ENCODE measurements at regions of chr14 and their contacts with region 1.

Region 1: DNA sequence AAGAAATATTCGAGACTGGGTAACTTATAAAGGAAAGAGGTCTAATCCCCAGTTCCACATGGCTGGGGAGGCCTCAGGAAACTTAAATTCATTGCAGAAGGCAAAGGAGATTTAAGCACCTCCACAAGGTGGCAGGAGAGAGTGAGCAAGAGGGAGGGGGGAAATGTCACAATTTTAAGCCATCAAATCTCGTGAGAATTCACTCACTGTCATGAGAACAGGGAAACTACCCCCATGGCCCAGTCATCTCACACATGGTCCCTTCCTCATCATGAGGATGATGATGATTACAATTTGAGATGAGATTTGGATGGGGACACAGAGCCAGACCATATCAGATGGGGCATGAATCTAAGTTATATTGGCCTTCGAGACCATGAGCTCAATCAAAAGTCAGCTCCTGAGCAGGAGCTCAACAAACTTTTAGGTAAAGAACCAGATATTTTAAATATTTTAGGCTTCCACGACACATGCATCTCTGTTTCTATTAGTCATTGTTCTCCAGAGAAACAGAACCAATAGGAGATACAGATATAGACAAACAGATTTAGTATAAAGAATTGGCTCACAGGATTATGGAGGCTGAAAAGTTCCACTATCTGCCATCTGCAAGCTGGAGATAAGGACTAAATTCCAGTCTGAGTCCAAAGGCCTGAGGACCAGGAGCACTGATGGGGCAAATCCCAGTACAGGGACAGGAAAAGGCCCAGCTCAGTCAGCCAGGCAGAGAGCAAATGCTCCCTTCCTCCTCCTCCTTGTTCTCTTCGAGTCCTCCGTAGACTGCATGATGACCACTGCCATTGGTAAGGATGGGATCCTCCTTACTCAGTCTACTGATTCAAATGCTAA is 24.9 kb downstream of the DGLUCY start:
- DNase-seq: no peak
- H3K4me3 ChIP-seq: no peak overlapping the region
- H3K27ac ChIP-seq: no peak overlapping the region
- H3K27me3 ChIP-seq: no peaks in the 10 kb centered on the region
- CTCF ChIP-seq: peak; percentile 54

Region 2: DNA sequence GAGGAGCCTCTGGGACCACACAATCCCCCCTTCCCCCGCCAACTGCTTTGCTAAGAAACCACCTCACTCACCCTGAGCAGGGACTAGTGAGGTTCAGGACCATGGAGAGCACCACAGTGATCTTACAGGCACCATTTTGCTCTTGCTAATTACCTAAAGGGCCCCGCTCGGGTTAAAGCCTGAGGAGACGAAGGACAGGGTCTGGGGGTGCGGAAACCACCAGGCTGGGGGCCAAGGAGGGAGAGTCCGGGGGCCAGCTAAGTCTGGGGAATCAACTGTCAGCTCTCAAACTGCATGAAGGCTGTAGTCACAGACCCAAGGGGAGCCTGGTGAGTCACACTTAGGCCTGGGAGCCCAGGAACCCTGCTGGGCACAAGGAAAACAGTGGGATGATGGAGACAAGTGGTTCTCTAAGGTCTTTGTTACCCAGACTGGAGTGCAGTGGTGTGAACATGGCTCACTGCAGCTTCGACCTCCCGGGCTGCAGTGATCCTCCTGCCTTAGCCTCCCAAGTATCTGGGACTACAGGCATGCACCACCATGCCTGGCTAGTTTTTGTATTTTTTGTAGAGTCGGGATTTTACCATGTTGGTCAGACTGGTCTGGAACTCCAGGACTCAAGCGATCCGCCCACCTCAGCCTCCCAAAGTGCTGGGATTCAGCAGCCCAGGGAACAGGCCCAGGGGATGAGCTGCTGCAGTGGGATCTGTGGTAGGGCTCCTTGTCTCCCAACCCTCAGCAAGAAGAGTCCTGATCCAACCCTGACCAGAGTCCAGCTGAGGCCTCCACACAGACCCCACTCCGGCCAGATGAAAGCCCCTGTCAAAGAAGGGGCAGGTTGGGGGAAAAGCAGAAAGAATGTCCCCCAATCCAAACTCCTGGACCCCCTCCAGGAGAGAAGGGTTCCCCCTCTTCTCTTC is 643.1 kb before region 1 on chr14:
- CTCF ChIA-PET with region 1: no interaction called
- POLR2A ChIA-PET with region 1: no interaction called
- DNase-seq: peak; percentile 44
- H3K4me3 ChIP-seq: no peak overlapping the region
- H3K27ac ChIP-seq: no peak overlapping the region
- H3K27me3 ChIP-seq: peaks cover 9% of the 10 kb centered on the region
- CTCF ChIP-seq: no peak

Region 3: GRCh38 chr14:90795746-90796145 is 343.0 kb before region 1 on chr14:
- CTCF ChIA-PET with region 1: interaction called, 14 read pairs
- POLR2A ChIA-PET with region 1: no interaction called
- DNase-seq: peak; percentile 59
- H3K4me3 ChIP-seq: no peak overlapping the region
- H3K27ac ChIP-seq: peak overlapping the region; percentile 59
- H3K27me3 ChIP-seq: no peaks in the 10 kb centered on the region
- CTCF ChIP-seq: 0 out of 2 replicates have a peak, but pooled peaks have one; percentile 10

Region 4: GRCh38 chr14:90959344-90959743 is 179.4 kb before region 1 on chr14:
- CTCF ChIA-PET with region 1: no interaction called
- POLR2A ChIA-PET with region 1: no interaction called
- DNase-seq: no peak
- H3K4me3 ChIP-seq: no peak overlapping the region
- H3K27ac ChIP-seq: no peak overlapping the region
- H3K27me3 ChIP-seq: peaks cover 5% of the 10 kb centered on the region
- CTCF ChIP-seq: no peak

Region 5: GRCh38 chr14:91108941-91109611 is 29.7 kb before region 1 on chr14:
- CTCF ChIA-PET with region 1: interaction called, 10 read pairs
- POLR2A ChIA-PET with region 1: interaction called, 11 read pairs
- DNase-seq: no peak
- H3K4me3 ChIP-seq: no peak overlapping the region
- H3K27ac ChIP-seq: no peak overlapping the region
- H3K27me3 ChIP-seq: no peaks in the 10 kb centered on the region
- CTCF ChIP-seq: no peak

Region 6: DNA sequence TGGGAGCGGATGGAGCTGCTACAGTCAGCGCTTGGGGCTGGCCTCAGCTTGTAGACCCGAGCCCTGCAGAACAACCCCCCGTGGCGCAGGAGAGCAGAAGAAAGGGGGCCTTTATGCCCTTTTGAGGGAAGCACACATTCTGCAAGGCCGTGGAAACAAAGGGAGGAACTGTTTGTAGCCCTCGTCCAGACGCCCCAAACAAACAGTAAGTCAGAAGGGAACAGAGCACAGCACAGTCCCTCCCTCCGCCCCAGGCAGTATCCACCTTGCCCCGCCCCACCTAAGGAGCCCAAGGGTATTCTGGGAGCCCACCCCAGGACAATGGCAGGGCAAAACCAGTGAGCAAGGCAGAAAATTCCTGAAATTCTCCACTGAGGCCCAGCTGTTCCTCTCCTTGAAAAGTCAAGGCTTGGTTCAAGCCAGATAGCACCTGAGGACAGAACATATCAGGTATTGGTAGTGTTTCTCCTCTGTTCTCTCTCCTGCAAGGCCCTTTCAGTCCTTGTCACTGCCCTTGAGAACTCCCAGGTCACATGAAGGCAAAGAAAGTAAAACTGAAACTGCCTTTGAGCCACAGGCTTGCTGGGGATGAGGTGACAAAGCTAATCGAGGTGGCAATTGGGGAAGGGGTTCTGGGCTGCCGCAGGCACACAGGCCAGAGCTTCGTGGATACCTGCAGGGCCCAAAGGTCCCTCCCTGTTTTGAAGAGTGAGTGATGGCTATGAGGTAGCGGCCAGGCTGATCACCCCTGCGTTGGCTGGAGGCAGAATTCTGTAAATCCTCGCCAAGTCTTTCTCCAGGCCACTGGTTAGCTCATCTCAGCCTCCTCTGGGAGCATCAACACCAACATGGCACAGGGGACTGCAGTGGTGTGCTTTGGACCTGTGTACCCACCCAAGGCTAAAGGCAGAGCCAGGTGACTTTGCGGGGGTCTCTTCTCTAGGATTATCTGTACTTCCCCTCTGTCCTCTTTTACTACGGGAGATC is 24.4 kb before region 1 on chr14:
- CTCF ChIA-PET with region 1: interaction called, 10 read pairs
- POLR2A ChIA-PET with region 1: interaction called, 11 read pairs
- DNase-seq: no peak
- H3K4me3 ChIP-seq: peak overlapping the region; percentile 73
- H3K27ac ChIP-seq: peak overlapping the region; percentile 61
- H3K27me3 ChIP-seq: no peaks in the 10 kb centered on the region
- CTCF ChIP-seq: no peak